H1 (cell line): ENCODE measurements at regions of chr19 and their contacts with region 1.

Region 1: DNA sequence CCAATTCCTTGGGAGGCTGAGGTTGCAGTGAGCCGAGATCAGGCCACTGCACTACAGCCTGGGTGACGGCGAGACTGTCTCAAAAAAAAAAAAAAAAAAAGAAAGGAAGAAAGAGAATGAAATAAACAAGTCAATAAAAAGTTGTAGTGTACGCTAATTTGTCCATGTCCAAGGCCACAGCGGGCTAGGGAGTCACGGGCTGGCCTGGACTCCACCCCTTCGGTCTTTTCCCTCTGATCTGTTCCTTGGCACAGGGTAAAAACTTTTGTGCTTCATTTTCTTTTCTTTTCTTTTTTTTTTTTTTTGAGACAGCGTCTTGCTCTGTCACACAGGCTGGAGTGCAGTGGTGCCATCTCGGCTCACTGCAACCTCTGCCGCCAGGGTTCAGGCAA is 19.4 kb upstream of the MKNK2 start:
- DNase-seq: no peak
- H3K4me3 ChIP-seq: no peak overlapping the region
- H3K27ac ChIP-seq: no peak overlapping the region
- H3K4me1 ChIP-seq: no peaks in the 10 kb centered on the region; a peak in 1 of 7 replicates
- H3K27me3 ChIP-seq: no peaks in the 10 kb centered on the region
- CTCF ChIP-seq: no peak
- EP300 ChIP-seq: no peak
- POLR2A ChIP-seq: no peak
- RAD21 ChIP-seq: no peak

Region 2: DNA sequence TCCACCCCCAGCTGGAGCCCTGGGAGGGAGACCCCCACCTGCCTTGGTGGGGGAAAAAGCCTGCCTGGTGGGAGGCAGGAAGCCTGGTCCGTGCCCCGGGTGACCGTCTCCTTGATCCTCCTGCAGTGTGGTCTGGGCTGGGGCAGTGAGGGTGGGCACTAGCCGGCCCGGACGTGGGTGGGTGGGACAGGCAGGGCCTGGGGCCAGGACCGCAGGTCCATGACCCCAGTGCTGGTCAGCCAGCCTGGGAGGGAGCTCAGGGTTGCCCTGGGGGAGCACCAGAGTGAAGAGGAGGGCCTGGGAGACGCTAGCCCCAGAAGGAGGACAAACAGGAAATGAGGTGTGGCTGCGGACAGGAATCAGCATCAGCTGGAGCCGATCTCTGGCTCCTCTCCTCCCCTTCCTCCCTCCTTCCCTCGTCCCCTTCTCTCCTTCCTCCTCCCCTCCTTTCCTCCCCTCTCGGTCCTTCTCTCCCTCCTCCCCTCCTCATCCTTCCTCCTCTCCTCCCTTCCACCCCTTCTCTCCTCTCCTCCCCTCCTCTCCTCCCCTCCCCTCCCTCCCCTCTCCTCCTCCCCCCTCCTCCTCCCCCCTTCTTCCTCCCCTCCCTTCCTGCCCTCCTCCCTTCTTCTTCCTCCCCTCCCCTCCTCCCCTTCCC is 14.1 kb before region 1 on chr19:
- CTCF ChIA-PET with region 1: interaction called, 17 read pairs
- POLR2A ChIA-PET with region 1: interaction called, 8 read pairs
- DNase-seq: peak in 1 of 2 experiments; percentile 62
- H3K4me3 ChIP-seq: no peak overlapping the region
- H3K27ac ChIP-seq: no peak overlapping the region; the same call in 1 of the 2 replicates
- H3K4me1 ChIP-seq: peaks cover 4 to 22% (median 18%) of the 10 kb centered on the region in 4 experiments
- H3K27me3 ChIP-seq: no peaks in the 10 kb centered on the region
- CTCF ChIP-seq: no peak
- EP300 ChIP-seq: no peak
- POLR2A ChIP-seq: peak in 1 of 2 experiments; percentile 31; a peak in 1 of 3 replicates
- RAD21 ChIP-seq: no peak

Region 3: GRCh38 chr19:2084993-2085720 is 14.7 kb after region 1 on chr19:
- CTCF ChIA-PET with region 1: interaction called, 14 read pairs
- POLR2A ChIA-PET with region 1: no interaction called
- DNase-seq: no peak
- H3K4me3 ChIP-seq: no peak overlapping the region
- H3K27ac ChIP-seq: no peak overlapping the region
- H3K4me1 ChIP-seq: peaks cover 0 to 5% (median 2%) of the 10 kb centered on the region in 4 experiments; a peak in 3 of 7 replicates
- H3K27me3 ChIP-seq: no peaks in the 10 kb centered on the region
- CTCF ChIP-seq: no peak
- EP300 ChIP-seq: no peak
- POLR2A ChIP-seq: no peak
- RAD21 ChIP-seq: no peak

Region 4: GRCh38 chr19:2199215-2199614 is 128.8 kb after region 1 on chr19:
- CTCF ChIA-PET with region 1: no interaction called
- POLR2A ChIA-PET with region 1: no interaction called
- DNase-seq: peak in 1 of 2 experiments; percentile 79
- H3K4me3 ChIP-seq: no peak overlapping the region
- H3K27ac ChIP-seq: no peak overlapping the region
- H3K4me1 ChIP-seq: no peaks in the 10 kb centered on the region
- H3K27me3 ChIP-seq: no peaks in the 10 kb centered on the region
- CTCF ChIP-seq: peak; percentile 76 to 82 (median 76)
- EP300 ChIP-seq: 0 out of 3 replicates have a peak, but pooled peaks of 1 of the 2 experiments have one; percentile 14
- POLR2A ChIP-seq: no peak
- RAD21 ChIP-seq: peak; percentile 47 to 65